ENCODE measurements at regions of chr7 and their contacts with region 1.

Region 1: GRCh38 chr7:27921081-27921836 is 181.3 kb downstream of the TAX1BP1 start:
- DNase-seq: no peak
- ATAC-seq: peak; percentile 68

Region 2: GRCh38 chr7:27739909-27740448 is 181.3 kb before region 1 on chr7 and contains the start of gene TAX1BP1:
- intact Hi-C with region 1: loop called (anchors 10 kb)
- DNase-seq: peak; percentile 98
- ATAC-seq: peak; percentile 100
- total RNA-seq, gene TAX1BP1: 158 TPM

Region 3: DNA sequence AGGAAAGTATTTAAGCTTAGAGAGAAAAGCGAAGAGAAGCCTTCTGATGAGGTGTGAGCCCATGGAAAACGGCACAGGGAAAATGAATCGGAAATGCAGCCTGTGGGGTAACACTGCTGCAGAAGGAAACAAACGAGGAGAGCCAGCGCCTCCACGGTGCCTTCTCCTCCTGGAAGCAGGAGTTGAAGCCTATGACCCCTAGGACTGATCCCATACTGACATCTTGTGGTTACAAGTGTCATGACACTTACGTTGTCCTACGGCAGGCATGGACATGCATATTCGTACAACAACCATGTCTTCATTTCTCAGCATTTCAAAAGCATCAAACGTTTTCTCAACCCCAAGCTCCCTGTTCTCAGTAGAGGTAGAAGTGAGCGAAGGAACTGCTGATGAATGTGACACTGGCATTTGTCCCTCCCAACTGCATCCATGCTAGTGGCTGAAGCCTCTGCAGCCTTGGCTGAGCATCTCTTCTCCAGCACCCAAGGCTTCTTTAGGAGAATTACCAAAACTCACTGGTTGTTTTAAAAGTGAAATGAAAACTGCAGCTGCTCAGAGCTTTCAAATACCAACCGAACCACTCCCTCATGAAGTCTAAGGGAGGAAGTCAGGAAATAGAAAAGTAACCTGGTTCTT is 99.2 kb after region 1 on chr7:
- intact Hi-C with region 1: loop called (anchors 10 kb)
- DNase-seq: peak; percentile 73
- ATAC-seq: peak; percentile 76